Mucosa of descending colon (tissue), 3 donors: ENCODE measurements at regions of chr12 and their contacts with region 1.

Region 1: GRCh38 chr12:46124848-46125619 is 134.7 kb upstream of the SCAF11 start:
- DNase-seq: peak in 1 of 3 donors; percentile 76
- ATAC-seq: peak; percentile 96
- H3K4me3 ChIP-seq: no peak overlapping the region
- H3K4me1 ChIP-seq: peaks cover 11% of the 10 kb centered on the region
- CTCF ChIP-seq: peak; percentile 24

Region 2: DNA sequence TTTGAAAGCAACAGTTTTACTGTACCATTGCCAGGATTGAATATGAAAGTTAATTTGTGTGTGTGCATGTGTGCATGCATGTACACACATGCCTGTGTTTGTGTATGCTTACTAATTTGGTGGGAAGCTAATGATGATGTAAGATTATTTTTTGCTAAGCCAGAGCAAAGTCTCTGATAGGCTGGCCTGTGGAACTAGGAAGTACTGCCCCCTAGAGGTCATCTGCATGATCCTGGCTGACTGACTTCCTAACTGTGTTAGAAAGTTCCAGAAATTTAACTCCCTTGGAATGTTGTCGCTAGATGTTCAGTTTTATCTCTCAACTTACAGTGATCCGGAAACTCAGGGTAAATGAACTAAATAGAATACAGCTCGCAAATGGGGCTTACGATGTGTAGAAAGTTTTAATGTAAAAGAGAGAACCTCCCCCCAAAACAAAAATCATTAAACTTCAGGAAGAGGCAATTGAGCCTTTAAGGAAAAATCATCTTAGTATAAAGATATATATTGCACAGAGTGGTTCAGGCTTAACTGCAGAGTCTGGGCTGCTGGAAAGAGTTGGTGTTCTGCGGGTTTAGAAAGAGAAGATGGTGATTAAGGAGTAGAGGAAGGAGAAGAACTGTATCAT is 178.1 kb after region 1 on chr12:
- intact Hi-C with region 1: loop called in 1 of 2 experiments (anchors 10 kb)
- DNase-seq: peak in 2 of 3 donors; percentile 22 to 82
- ATAC-seq: peak; percentile 82
- H3K4me3 ChIP-seq: no peak overlapping the region
- H3K4me1 ChIP-seq: no peaks in the 10 kb centered on the region
- CTCF ChIP-seq: peak; percentile 37